Activated CD8-positive, alpha-beta T cell treated with anti-CD3 and anti-CD28 coated beads, Interleukin-2, amount 10 ng/mL, durations not matched to agents 7 days and 5 days (primary cell): ENCODE measurements at regions of chr17 and their contacts with region 1.

Region 1: DNA sequence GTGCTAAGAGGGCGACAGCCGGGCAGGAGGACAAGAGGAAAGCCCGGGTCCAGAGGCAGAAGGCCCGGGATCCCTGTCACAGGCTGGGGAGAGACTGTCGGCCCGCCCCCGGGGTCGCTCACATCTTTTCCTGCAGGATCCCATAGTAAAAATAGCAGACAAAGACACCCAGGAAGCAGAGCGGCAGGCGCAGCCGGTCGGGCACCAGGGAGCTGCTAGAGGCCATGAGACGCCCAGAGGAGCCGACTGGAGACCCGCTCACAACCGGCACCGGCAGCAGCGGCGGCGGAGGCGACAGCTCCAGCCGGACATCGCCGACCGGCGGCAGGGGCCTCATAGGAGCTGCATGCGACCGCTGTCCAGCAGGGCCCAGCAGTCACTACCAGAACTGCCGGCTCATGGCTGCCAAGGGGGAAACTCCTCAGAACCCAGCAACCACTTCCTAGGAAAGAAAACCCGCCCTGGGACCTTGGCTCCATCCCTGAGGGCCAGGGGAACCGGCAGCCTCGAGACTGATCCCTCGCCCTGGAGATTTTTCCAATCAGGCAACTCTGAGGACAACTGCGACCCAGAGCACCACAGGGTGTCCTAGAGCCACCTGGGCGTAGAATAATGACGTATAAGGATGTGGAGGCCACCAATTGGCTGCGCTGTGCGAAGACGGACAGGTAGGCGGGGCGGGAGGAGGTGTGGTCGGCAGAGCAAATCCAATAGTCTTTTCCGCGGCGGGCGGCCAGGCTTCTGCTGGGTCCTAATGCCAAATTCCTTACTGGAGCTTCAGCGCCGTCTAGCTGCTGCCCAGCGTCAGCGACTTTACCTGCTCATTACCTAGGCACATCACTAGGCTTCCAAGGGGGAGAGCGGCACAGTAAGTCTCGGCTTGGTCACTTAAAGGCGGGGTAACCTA is at the start of gene SLC35B1:
- DNase-seq: peak; percentile 99
- ATAC-seq: peak; percentile 99
- H3K4me3 Mint-ChIP-seq: peak within 1 kb of the TSS; percentile 94
- H3K27ac Mint-ChIP-seq: peak within 1 kb of the TSS; percentile 97
- H3K4me1 Mint-ChIP-seq: peaks cover 42% of the 10 kb centered on the region
- H3K27me3 Mint-ChIP-seq: no peaks in the 10 kb centered on the region
- total RNA-seq, gene SLC35B1: 50.7 to 62.6 TPM

Region 2: GRCh38 chr17:49694847-49695683 is 12.8 kb before region 1 on chr17:
- CTCF ChIA-PET with region 1: interaction called, 78 read pairs
- POLR2A ChIA-PET with region 1: interaction called, 16 read pairs
- DNase-seq: peak; percentile 84
- ATAC-seq: peak; percentile 23
- H3K4me3 Mint-ChIP-seq: peak overlapping the region; percentile 30
- H3K27ac Mint-ChIP-seq: peak overlapping the region; percentile 81
- H3K4me1 Mint-ChIP-seq: peaks cover 40% of the 10 kb centered on the region
- H3K27me3 Mint-ChIP-seq: no peaks in the 10 kb centered on the region

Region 3: GRCh38 chr17:49739641-49740271 is 31.9 kb after region 1 on chr17:
- CTCF ChIA-PET with region 1: interaction called, 22 read pairs
- POLR2A ChIA-PET with region 1: interaction called, 13 read pairs
- DNase-seq: peak; percentile 92
- ATAC-seq: peak; percentile 93
- H3K4me3 Mint-ChIP-seq: peak overlapping the region; percentile 84
- H3K27ac Mint-ChIP-seq: peak overlapping the region; percentile 98
- H3K4me1 Mint-ChIP-seq: peaks cover 80% of the 10 kb centered on the region
- H3K27me3 Mint-ChIP-seq: no peaks in the 10 kb centered on the region

Region 4: GRCh38 chr17:49763735-49764558 is 56.1 kb after region 1 on chr17 and contains the start of gene FAM117A:
- CTCF ChIA-PET with region 1: interaction called, 17 read pairs
- POLR2A ChIA-PET with region 1: interaction called, 21 read pairs
- DNase-seq: peak; percentile 99
- ATAC-seq: peak; percentile 96
- H3K4me3 Mint-ChIP-seq: peak within 1 kb of the TSS; percentile 88
- H3K27ac Mint-ChIP-seq: peak within 1 kb of the TSS; percentile 87
- H3K4me1 Mint-ChIP-seq: peaks cover 48% of the 10 kb centered on the region
- H3K27me3 Mint-ChIP-seq: peaks cover 18% of the 10 kb centered on the region
- total RNA-seq, gene FAM117A: 20.8 to 23.5 TPM

Region 5: GRCh38 chr17:49788478-49789242 is 80.8 kb after region 1 on chr17 and contains the start of gene KAT7:
- CTCF ChIA-PET with region 1: interaction called, 38 read pairs
- POLR2A ChIA-PET with region 1: interaction called, 19 read pairs
- DNase-seq: peak; percentile 99
- ATAC-seq: peak; percentile 96
- H3K4me3 Mint-ChIP-seq: peak within 1 kb of the TSS; percentile 94
- H3K27ac Mint-ChIP-seq: peak within 1 kb of the TSS; percentile 96
- H3K4me1 Mint-ChIP-seq: peaks cover 51% of the 10 kb centered on the region
- H3K27me3 Mint-ChIP-seq: no peaks in the 10 kb centered on the region
- total RNA-seq, gene KAT7: 75.8 to 76.0 TPM